ENCODE measurements at regions of chr15 and their contacts with region 1.

Region 1: GRCh38 chr15:98442379-98442833 is 205.9 kb upstream of the IGF1R start:
- DNase-seq: peak; percentile 74 to 79
- H3K4me3 ChIP-seq: no peak overlapping the region
- H3K27ac ChIP-seq: no peak overlapping the region
- H3K4me1 ChIP-seq: peaks cover 15% of the 10 kb centered on the region
- H3K27me3 ChIP-seq: peaks cover 24% of the 10 kb centered on the region; the same call in 1 of the 2 replicates
- CTCF ChIP-seq: peak; percentile 88

Region 2: GRCh38 chr15:98342911-98343310 is 99.5 kb before region 1 on chr15:
- CTCF ChIA-PET with region 1: no interaction called
- POLR2A ChIA-PET with region 1: no interaction called
- intact Hi-C with region 1: no loop called
- DNase-seq: no peak
- H3K4me3 ChIP-seq: no peak overlapping the region
- H3K27ac ChIP-seq: no peak overlapping the region
- H3K4me1 ChIP-seq: no peaks in the 10 kb centered on the region
- H3K27me3 ChIP-seq: peaks cover 32% of the 10 kb centered on the region
- CTCF ChIP-seq: no peak

Region 3: DNA sequence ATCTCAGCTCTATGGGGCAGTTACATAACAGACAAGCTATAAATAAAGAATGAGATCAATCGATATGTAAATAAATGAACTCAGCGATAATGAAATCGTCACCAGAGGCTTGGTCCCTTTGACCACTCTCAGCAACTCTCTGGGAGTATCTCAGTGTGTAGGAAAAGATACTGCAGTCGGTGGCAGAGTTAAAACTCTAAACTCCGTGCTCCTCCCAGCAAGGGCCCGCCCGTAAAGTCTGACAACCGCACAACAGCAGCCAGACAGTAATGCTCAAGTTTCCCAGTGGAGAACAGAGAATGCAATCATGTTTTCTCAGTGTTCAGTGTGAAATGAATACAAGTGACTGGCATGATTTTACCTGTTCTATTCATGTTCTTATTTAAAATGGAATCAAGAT is 177.6 kb after region 1 on chr15:
- CTCF ChIA-PET with region 1: no interaction called
- POLR2A ChIA-PET with region 1: no interaction called
- intact Hi-C with region 1: no loop called
- DNase-seq: no peak
- H3K4me3 ChIP-seq: no peak overlapping the region
- H3K27ac ChIP-seq: no peak overlapping the region
- H3K4me1 ChIP-seq: no peaks in the 10 kb centered on the region
- H3K27me3 ChIP-seq: no peaks in the 10 kb centered on the region
- CTCF ChIP-seq: no peak

Region 4: DNA sequence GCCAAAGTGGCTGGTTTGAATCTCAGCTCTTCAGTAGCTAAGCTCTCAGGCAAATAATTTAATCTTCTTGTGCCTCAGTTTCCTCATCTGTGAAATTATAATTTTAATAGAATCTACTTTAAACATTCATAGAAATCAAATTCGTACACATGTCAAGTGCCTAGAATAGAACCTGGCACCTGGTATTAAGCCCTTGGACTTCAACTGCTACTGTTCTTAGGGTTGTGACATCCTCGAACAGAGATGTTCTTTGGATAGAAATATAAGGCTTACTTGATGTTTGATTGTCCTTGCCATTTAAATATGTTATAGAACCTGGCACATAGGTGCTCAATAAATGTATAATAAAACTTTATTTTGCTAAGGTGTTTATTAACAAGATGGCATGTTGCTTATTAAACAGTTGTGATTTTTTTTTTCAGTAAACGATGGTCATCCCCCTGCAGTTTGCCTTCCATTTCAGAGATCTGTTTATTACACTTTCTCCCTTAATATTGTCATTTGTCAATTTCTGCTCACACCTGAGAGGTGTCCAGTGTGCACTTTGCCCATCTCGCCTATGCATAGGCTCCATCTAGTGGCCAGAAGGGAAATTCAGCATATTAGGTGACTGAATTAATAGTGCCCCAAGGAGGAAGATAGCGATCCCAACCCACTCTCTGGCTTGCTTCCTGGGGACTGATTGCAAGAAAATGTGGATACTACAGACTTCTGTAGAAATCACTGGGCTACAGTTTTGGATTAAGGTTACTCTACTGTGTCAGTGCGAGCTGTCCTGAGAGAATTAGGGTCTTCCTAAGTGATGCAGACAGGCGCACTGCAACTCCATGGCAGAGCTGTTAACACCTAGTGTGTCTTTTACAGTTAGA is 216.7 kb after region 1 on chr15:
- CTCF ChIA-PET with region 1: no interaction called
- POLR2A ChIA-PET with region 1: no interaction called
- intact Hi-C with region 1: loop called (anchors 1 kb)
- DNase-seq: peak; percentile 35 to 47
- H3K4me3 ChIP-seq: no peak overlapping the region
- H3K27ac ChIP-seq: no peak overlapping the region
- H3K4me1 ChIP-seq: peaks cover 13% of the 10 kb centered on the region
- H3K27me3 ChIP-seq: no peaks in the 10 kb centered on the region
- CTCF ChIP-seq: peak; percentile 84

Region 5: DNA sequence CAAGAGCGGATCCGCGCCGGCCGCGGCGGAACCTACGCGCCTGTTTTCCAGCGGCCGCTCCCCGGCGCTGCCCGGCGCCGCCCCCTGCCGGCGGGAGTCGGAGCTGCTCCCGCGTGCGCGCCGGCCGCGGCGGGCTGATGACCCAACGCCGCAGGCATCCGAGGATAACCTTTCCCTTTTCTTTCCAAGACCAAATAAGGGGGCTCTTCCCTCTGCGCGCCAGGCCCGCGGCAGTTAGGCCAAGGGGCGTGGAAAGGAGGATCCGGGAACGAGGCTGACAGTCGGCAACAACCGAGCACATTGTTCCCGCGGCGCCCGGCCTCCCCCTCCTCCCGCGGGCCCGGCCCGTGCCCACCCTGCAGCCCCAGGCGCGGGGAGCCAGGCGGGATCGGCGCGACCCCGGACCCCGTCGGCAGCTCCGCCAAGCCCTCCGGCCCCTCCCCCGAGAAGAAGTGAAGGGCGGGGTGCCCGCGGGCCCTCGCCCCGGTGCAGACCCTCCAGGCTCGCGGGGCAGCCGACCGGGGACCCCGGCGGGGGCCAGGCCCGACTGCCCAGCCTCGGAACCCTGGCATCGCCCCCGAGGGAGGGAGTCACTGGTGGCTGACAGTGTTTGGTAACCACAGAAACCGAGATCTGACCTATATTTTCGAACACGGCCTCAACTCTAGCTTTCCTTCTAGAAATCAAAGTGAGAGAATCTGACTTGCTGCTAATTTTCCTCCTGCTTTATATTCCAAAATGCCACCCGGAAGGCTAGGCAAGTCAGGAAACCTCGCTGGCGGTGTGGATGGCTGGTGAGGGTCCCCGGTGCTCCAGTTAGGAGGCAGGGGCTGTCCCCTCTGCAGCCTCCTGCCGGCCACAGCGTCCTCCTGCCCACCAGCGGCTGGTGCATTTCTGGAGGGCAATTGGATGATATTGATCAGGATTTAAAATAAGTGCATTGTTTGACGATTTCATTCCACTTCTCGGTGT is 616.9 kb after region 1 on chr15:
- CTCF ChIA-PET with region 1: no interaction called
- POLR2A ChIA-PET with region 1: interaction called, 3 read pairs
- intact Hi-C with region 1: loop called (anchors 5 kb)
- DNase-seq: peak; percentile 49 to 81
- H3K4me3 ChIP-seq: peak overlapping the region; percentile 56; the same call in 1 of the 2 replicates
- H3K27ac ChIP-seq: no peak overlapping the region
- H3K4me1 ChIP-seq: no peaks in the 10 kb centered on the region; the same call in 1 of the 2 replicates
- H3K27me3 ChIP-seq: peaks cover 25% of the 10 kb centered on the region
- CTCF ChIP-seq: peak; percentile 43

Region 6: DNA sequence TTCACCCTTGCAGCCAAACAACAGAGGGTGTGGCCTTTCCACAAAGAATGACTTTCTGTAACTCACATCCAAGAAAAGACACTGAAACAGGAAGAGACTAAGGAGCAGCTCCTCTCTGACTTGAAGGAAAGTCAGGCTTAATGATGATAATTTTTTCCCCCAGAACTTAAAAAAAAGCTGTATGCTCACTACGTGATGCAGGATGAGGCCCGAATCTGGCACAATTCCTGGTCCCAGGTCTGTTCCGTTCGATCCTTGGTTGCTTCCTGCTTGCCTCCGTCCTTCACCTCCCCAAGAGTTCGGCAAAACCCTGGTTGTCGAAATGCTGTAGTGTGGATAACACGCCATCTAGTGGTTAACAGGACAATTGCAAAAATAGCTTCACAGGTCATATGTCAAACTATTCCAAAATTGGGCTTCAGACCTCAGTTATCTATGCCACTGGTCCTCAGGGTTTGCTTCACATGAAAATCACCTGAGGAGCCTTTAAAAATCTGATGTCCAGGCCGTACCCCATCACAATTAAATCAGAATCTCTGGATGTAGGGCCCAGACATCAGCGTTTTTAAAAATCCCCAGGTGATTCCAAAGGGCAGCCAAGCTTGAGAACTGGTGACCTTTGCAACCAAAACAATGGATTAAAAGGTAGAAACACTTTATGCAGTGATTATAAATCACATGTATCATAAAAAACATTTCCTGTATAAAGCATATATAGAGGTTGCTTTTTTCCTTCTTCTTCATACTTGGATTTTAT is 634.3 kb after region 1 on chr15:
- CTCF ChIA-PET with region 1: no interaction called
- POLR2A ChIA-PET with region 1: no interaction called
- intact Hi-C with region 1: loop called (anchors 1 kb)
- DNase-seq: peak; percentile 51 to 58
- H3K4me3 ChIP-seq: peak overlapping the region; percentile 51; the same call in 1 of the 2 replicates
- H3K27ac ChIP-seq: no peak overlapping the region
- H3K4me1 ChIP-seq: no peaks in the 10 kb centered on the region
- H3K27me3 ChIP-seq: no peaks in the 10 kb centered on the region
- CTCF ChIP-seq: peak; percentile 92

Region 7: GRCh38 chr15:99213187-99213811 is 770.9 kb after region 1 on chr15:
- CTCF ChIA-PET with region 1: no interaction called
- POLR2A ChIA-PET with region 1: no interaction called
- intact Hi-C with region 1: loop called (anchors 2 kb)
- DNase-seq: peak in 1 of 2 experiments; percentile 69
- H3K4me3 ChIP-seq: no peak overlapping the region
- H3K27ac ChIP-seq: no peak overlapping the region
- H3K4me1 ChIP-seq: no peaks in the 10 kb centered on the region
- H3K27me3 ChIP-seq: no peaks in the 10 kb centered on the region
- CTCF ChIP-seq: peak; percentile 92

Measured in PC-9 (cell line).